CD4-positive, alpha-beta memory T cell (primary cell): ENCODE measurements at regions of chr9 and their contacts with region 1.

Region 1: GRCh38 chr9:36461323-36461722 is 61.3 kb upstream of the RNF38 start:
- DNase-seq: no peak
- H3K4me3 ChIP-seq: no peak overlapping the region
- H3K4me3 Mint-ChIP-seq: peak overlapping the region in 1 of 8 donors; percentile 28
- H3K27ac ChIP-seq: no peak overlapping the region
- H3K27ac Mint-ChIP-seq: peak overlapping the region; percentile 2 to 64 (median 43)
- H3K4me1 ChIP-seq: peaks cover 29% of the 10 kb centered on the region
- H3K4me1 Mint-ChIP-seq: peaks cover 43 to 68% (median 53%) of the 10 kb centered on the region in 4 donors
- H3K27me3 ChIP-seq: no peaks in the 10 kb centered on the region
- H3K27me3 Mint-ChIP-seq: no peaks in the 10 kb centered on the region

Region 2: DNA sequence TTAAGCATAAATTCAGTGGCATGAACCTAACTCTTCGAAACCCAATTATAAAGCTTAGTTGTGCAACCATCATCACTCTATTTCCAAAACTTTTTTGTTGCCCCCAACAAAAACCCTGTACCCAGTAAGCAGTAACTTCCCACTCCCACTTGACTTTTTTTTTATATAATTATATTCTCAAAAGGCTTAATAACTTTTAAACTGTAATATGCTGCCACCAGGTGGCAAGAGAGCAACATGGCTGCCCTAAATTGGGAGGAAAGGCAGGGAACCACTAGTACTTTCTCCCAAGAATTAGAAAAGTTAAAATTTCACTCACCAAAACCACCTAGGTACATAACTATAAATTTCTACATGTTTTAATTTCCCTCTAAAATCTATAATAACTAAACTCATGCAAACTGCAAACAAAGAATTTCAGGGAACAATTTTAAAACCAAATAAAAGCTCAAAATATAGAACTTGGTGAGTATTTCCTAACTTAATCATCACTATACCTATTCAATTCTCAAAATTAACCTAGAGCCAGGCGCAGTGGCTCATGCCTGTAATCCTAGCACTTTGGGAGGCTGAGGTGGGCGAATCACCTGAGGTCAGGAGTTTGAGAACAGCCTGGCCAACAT is 11.1 kb before region 1 on chr9:
- CTCF ChIA-PET with region 1: interaction called, 17 read pairs
- POLR2A ChIA-PET with region 1: no interaction called
- intact Hi-C with region 1: no loop called
- DNase-seq: peak in 4 of 5 donors; percentile 24 to 30 (median 29)
- H3K4me3 ChIP-seq: no peak overlapping the region
- H3K4me3 Mint-ChIP-seq: no peak overlapping the region
- H3K27ac ChIP-seq: no peak overlapping the region
- H3K27ac Mint-ChIP-seq: peak overlapping the region in 2 of 7 donors; percentile 12 to 29
- H3K4me1 ChIP-seq: peaks cover 20% of the 10 kb centered on the region
- H3K4me1 Mint-ChIP-seq: peaks cover 16 to 32% (median 25%) of the 10 kb centered on the region in 4 donors
- H3K27me3 ChIP-seq: no peaks in the 10 kb centered on the region
- H3K27me3 Mint-ChIP-seq: no peaks in the 10 kb centered on the region

Region 3: DNA sequence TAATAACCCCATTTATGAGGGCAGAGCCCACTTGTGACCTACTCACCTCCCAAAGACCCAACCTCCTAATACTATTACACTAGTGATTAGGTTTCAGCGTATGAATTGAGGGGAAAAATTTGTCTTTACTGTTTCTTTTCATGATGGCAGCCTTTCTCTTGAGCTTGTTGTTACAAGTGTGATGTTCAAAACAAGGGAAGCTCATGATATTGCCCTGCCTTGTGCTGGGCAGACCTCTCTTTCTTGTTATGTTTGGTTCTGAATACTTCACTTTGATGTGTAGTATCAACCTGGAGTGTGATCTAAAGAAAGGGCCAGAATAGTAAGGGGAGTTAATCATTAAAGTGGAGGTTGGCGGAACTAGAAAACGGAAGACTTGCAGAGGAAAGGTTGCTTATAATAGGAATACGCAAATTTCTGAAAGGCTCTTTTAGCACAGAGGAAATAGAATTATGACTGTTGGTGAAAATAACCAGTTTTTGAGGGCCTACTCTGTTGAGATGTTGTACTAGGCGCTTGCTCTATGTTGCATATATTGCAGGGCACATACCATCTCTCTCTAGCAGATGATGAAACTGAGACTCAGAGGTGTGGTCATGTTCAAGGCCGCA is 179.6 kb after region 1 on chr9:
- CTCF ChIA-PET with region 1: no interaction called
- POLR2A ChIA-PET with region 1: no interaction called
- intact Hi-C with region 1: no loop called
- DNase-seq: no peak
- H3K4me3 ChIP-seq: no peak overlapping the region
- H3K4me3 Mint-ChIP-seq: peak overlapping the region in 1 of 8 donors; percentile 41
- H3K27ac ChIP-seq: no peak overlapping the region
- H3K27ac Mint-ChIP-seq: no peak overlapping the region
- H3K4me1 ChIP-seq: no peaks in the 10 kb centered on the region
- H3K4me1 Mint-ChIP-seq: peaks cover 0 to 3% (median 1%) of the 10 kb centered on the region in 4 donors
- H3K27me3 ChIP-seq: no peaks in the 10 kb centered on the region
- H3K27me3 Mint-ChIP-seq: no peaks in the 10 kb centered on the region